Activated B cell treated with CpG ODN at 0.5 μM for 24 hours (primary cell): ENCODE measurements at regions of chr2 and their contacts with region 1.

Region 1: DNA sequence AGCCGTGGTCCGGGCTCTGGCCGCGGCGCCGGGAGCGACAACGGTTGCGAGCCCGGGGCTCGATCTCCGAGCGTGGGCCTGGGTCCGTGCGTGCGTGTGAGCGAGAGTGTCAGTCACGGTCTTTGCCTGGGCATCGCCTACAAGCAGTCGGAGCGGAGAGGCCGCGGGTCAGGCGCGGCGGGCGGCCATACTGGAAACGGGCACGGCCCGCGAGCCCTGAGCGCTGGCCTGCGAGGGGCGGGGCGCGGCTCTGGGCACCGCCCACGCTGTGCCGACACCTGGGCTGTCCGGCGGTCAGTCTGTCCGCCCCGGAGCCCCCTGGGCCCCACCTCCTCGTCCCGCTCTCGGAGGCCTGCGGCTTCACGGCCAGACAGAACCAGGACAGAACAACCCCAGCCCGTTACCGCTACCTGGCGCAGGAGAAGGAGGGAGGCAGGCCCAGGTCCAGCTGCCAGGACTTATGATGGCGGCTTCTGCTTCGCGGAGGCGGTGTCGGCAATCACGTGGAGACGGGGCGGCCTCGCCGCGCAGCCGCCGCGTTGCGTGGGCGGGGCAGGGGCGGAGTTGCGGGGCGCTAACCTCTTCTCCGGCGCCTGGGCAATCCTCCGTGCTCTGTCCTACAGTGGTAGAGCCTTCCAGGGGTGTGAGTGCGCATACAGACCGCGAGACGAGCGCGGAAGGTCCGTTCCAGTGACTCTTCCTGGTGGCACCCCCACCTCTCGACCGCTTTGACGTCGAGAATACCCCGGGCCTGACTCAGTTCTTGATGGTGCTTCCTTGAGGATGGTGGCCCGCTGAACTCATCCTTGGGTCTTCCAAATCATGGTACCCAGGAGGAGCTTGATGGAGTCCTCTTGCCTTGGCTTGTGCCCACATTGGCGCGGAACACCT is at the start of gene TMEM131:
- DNase-seq: peak; percentile 98
- ATAC-seq: peak; percentile 80
- H3K4me3 Mint-ChIP-seq: peak within 1 kb of the TSS; percentile 93
- H3K27ac Mint-ChIP-seq: peak within 1 kb of the TSS; percentile 91
- H3K4me1 Mint-ChIP-seq: peaks cover 49% of the 10 kb centered on the region
- H3K27me3 Mint-ChIP-seq: no peaks in the 10 kb centered on the region
- CTCF ChIP-seq: no peak
- total RNA-seq, gene TMEM131: 121 and 146 TPM in 2 replicates

Region 2: DNA sequence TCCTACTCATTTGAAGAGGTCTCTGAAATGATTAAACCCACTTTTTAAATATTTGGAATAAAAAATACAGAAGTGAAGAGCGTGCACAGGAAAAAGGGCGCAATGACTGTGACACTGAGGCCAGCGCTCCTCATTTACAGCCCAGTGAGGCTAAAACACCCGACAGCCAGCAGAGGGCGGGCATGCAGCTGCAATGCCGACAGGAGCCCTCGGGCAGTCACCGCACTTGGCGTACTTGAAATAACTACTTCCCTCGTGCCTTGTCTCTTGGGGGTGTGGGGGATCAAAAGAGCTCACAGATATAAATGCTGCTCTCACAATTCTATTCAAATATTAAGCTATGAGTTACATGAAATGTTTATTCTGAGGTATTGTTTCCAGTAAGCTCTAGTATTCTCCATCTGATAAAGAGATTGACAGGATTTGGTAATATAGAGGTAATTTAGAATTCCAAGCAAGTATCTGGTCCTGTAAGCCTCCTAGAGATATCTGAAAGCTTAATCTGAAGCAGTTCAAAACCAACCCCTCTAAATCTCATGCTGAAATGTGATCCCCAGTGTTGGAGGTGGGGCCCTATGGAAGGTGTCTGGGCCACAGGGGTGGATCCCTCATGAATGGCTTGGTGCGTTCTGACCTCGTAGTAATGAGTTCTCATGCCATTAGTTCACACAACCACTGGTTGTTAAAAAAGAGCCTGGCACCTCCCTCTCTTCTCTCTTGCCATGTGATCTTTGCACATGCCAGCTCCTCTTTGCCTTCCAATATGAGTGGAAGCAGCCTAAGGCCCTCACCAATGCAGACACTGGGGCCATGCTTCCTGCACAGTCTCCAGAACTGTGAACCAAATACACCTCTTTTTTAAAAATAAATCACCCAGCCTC is 189.0 kb before region 1 on chr2:
- CTCF ChIA-PET with region 1: interaction called, 9 read pairs
- POLR2A ChIA-PET with region 1: interaction called, 6 read pairs
- intact Hi-C with region 1: loop called (anchors 1 kb)
- DNase-seq: peak; percentile 68
- ATAC-seq: peak; percentile 96
- H3K4me3 Mint-ChIP-seq: no peak overlapping the region
- H3K27ac Mint-ChIP-seq: no peak overlapping the region
- H3K4me1 Mint-ChIP-seq: no peaks in the 10 kb centered on the region
- H3K27me3 Mint-ChIP-seq: no peaks in the 10 kb centered on the region
- CTCF ChIP-seq: peak; percentile 33

Region 3: GRCh38 chr2:97935719-97936161 is 60.2 kb before region 1 on chr2:
- CTCF ChIA-PET with region 1: no interaction called
- POLR2A ChIA-PET with region 1: interaction called, 6 read pairs
- intact Hi-C with region 1: loop called (anchors 2 kb)
- DNase-seq: no peak
- ATAC-seq: no peak
- H3K4me3 Mint-ChIP-seq: peak overlapping the region; percentile 56
- H3K27ac Mint-ChIP-seq: peak overlapping the region; percentile 65
- H3K4me1 Mint-ChIP-seq: peaks cover 96% of the 10 kb centered on the region
- H3K27me3 Mint-ChIP-seq: no peaks in the 10 kb centered on the region
- CTCF ChIP-seq: no peak

Region 4: GRCh38 chr2:98012561-98012991 is 16.6 kb after region 1 on chr2:
- CTCF ChIA-PET with region 1: interaction called, 3 read pairs
- POLR2A ChIA-PET with region 1: interaction called, 61 read pairs
- intact Hi-C with region 1: loop called (anchors 1 kb)
- DNase-seq: peak; percentile 61
- ATAC-seq: peak; percentile 81
- H3K4me3 Mint-ChIP-seq: peak overlapping the region; percentile 79
- H3K27ac Mint-ChIP-seq: peak overlapping the region; percentile 96
- H3K4me1 Mint-ChIP-seq: peaks cover 75% of the 10 kb centered on the region
- H3K27me3 Mint-ChIP-seq: no peaks in the 10 kb centered on the region
- CTCF ChIP-seq: no peak

Region 5: DNA sequence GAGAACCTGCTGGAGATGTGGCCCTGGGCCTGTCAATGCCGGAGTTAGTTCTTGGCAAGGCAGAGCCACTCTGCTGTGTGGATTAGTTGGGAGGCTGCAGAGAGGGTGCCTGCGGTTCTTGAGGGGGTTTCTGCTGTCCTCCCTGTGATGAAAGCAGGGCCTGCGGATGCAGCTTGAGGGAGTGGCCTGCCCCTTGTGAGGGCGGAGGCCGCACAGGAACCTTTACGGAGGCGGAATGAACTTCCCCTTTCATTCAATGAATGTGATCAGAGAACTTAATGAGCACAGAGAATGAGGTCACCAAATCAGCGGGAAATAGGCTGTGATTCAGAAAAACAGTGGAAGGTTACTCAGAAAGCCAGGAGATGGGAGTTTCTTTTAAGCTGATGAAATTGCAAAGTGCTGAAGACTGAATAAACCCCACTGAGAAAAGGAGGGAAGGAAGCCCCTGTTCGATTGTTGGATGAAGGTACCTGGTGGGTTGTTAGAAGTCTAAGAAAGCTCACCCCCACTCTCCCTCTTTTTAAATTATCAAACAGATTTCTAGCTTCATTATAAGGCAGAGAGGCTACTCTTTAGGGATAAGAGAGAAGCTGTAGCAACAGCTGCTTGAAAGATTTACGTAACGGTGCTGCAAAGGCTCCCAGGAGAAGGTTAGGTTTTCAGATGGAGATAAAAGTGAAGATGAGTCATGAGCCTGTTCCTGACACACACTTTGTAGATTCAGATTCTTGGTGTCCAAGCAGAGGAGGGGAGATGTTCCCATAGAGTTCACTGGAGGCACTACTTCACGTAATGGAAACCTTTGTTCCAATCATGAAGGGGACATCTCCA is 138.4 kb after region 1 on chr2:
- CTCF ChIA-PET with region 1: no interaction called
- POLR2A ChIA-PET with region 1: interaction called, 5 read pairs
- intact Hi-C with region 1: loop called (anchors 2 kb)
- DNase-seq: peak; percentile 60
- ATAC-seq: peak; percentile 99
- H3K4me3 Mint-ChIP-seq: peak overlapping the region; percentile 29
- H3K27ac Mint-ChIP-seq: peak overlapping the region; percentile 18
- H3K4me1 Mint-ChIP-seq: peaks cover 20% of the 10 kb centered on the region
- H3K27me3 Mint-ChIP-seq: no peaks in the 10 kb centered on the region
- CTCF ChIP-seq: no peak

Region 6: DNA sequence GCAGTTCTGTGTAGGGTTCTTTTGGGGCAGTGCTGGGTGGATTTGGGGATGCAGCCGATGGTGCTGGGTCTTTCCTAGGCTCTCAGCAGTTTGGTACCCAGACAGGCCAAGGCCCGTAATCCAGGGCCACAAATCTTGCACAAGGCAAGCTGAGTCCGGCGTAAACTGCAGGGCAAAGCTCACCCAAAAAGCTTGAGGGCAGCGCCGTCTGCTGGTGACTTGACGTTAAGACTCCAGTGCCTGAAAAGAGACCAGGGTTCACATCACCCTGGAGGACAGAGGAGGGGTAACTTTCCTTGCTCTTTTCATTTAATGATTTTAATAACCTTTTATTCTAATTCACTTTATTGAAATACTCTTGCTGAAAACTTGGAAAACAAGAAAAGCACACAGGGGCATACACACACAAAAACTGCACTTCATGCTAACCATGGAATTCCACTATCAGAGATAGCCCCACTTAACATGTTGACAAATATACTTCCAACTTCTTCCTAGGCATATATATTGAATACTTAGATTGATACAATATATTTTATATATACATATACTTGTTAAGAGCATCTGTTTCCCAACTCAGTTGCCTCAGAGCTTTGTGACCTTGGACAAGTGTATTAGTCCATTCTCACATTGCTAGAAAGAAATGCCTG is 389.2 kb after region 1 on chr2:
- CTCF ChIA-PET with region 1: no interaction called
- POLR2A ChIA-PET with region 1: no interaction called
- intact Hi-C with region 1: loop called (anchors 10 kb)
- DNase-seq: peak; percentile 58
- ATAC-seq: peak; percentile 78
- H3K4me3 Mint-ChIP-seq: no peak overlapping the region
- H3K27ac Mint-ChIP-seq: no peak overlapping the region
- H3K4me1 Mint-ChIP-seq: no peaks in the 10 kb centered on the region
- H3K27me3 Mint-ChIP-seq: peaks cover 10% of the 10 kb centered on the region
- CTCF ChIP-seq: peak; percentile 50

Region 7: GRCh38 chr2:98787700-98788099 is 791.7 kb after region 1 on chr2:
- CTCF ChIA-PET with region 1: no interaction called
- POLR2A ChIA-PET with region 1: no interaction called
- intact Hi-C with region 1: no loop called
- DNase-seq: no peak
- ATAC-seq: no peak
- H3K4me3 Mint-ChIP-seq: no peak overlapping the region
- H3K27ac Mint-ChIP-seq: no peak overlapping the region
- H3K4me1 Mint-ChIP-seq: peaks cover 3% of the 10 kb centered on the region
- H3K27me3 Mint-ChIP-seq: no peaks in the 10 kb centered on the region
- CTCF ChIP-seq: no peak